ENCODE measurements at regions of chr5 and their contacts with region 1.

Region 1: GRCh38 chr5:131796793-131797693 is at the start of gene FNIP1:
- DNase-seq: peak; percentile 98 to 100 (median 100)

Region 2: DNA sequence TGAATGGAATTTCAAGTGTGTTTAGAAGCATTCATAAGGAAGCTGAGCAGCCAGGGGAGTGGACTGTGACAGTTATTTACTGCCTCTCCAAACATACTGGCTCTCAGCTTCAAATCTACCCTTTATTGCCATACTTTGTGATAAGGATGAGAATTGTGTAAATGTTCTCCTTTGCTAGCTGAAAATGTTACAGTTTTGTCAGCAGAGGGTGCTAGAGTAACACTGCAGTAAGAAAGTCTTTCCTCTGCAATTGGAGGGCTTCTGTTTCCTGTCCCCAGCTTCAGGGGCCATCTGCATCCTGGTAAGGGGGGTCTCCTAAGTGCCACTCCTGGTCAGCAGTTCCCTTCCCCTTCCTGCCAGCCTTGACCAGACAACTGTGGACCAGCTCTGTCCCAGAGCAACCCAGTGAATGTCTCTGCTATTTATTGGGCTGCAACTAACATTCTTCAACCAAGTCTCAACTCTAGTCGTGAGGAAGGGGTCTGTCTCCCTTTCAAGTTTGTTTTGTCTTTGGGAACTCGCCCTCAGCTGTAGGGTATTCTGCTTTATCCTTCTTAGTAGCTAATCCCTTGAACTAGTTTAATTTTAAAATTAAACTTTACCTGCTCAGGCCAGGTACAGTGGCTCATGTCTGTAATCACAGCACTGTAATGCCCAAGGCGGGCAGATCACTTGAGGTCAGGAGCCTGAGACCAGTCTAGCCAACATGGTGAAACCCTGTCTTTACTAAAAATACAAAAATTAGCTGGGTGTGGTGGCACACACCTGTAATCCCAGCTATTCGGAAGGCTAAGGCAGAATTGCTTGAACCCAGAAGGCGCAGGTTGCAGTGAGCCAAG is 207.3 kb before region 1 on chr5:
- intact Hi-C with region 1: loop called (anchors 5 kb)
- DNase-seq: peak in 25 of 42 donors; percentile 6 to 73 (median 33)

Region 3: DNA sequence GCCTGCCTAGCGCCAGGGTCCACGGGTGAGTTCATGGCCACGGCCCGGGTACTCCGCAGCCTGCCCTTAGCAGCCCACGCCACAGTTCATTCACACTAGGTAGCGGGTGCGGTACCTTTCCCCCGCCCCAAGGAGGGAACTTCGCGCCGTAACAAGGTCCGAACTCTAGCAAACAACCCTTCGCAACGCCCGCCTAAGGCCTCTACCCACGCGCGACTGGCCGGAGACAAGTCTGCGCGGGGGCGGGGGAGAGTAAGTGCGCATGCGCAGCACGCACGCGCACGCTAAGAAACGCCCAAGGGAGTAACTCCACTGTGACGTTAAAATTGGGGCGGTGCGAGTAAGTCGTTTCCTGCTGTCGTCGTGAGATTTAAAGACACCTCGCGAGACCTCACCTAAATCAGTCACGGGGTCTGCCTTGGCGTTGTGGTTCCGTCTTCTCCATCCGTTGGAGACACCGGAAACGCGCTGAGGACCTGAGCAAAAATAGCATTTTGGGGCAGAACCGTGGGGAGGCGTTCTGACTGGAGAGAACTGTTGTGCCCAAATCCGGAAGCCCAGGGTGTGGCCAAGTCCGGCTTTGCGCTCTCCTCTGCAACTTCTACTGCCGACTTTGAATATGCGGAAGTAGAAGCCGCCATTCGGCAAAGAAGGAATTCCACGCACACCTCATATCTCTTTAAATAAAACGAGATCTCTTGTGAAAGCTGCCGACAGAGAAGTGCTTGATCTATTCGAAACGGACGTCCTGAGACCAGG is 161.9 kb before region 1 on chr5 and contains the start of gene RAPGEF6:
- intact Hi-C with region 1: loop called (anchors 2 kb)
- DNase-seq: peak; percentile 90 to 99 (median 97)

Region 4: DNA sequence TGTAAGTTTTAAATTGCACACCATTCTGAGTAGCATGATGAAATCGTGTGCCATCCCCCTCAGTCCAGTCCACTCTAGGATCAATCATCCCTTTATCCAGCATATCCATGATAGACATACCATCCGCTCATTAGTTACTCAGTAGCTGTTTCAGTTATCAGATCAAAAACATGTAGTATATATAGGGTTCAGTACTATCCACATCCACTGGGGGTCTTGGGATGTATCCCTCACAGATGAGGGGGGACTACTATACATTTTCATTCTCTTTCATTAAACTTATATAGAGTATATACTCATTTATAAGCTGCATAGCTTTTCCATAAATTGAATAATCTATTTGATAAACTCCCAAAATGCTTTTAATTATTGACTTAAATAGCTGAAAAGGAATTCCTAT is 80.8 kb after region 1 on chr5:
- intact Hi-C with region 1: no loop called
- DNase-seq: no peak

Measured in head of caudate nucleus (tissue), 42 donors.